ENCODE measurements at regions of chr1 and their contacts with region 1.

Region 1: GRCh38 chr1:93155335-93155734 is 24.9 kb downstream of the TMED5 start:
- DNase-seq: no peak
- H3K4me3 Mint-ChIP-seq: peak overlapping the region; percentile 0
- H3K27ac Mint-ChIP-seq: no peak overlapping the region
- H3K4me1 Mint-ChIP-seq: peaks cover 13% of the 10 kb centered on the region
- H3K27me3 Mint-ChIP-seq: no peaks in the 10 kb centered on the region

Region 2: GRCh38 chr1:92833840-92834239 is 321.5 kb before region 1 on chr1:
- CTCF ChIA-PET with region 1: no interaction called
- POLR2A ChIA-PET with region 1: no interaction called
- DNase-seq: no peak
- H3K4me3 Mint-ChIP-seq: peak overlapping the region; percentile 99
- H3K27ac Mint-ChIP-seq: peak overlapping the region; percentile 97
- H3K4me1 Mint-ChIP-seq: peaks cover 61% of the 10 kb centered on the region
- H3K27me3 Mint-ChIP-seq: no peaks in the 10 kb centered on the region

Region 3: GRCh38 chr1:93219443-93219842 is 64.1 kb after region 1 on chr1:
- CTCF ChIA-PET with region 1: interaction called, 3 read pairs
- POLR2A ChIA-PET with region 1: interaction called, 11 read pairs
- DNase-seq: peak; percentile 50
- H3K4me3 Mint-ChIP-seq: peak overlapping the region; percentile 57
- H3K27ac Mint-ChIP-seq: peak overlapping the region; percentile 83
- H3K4me1 Mint-ChIP-seq: peaks cover 30% of the 10 kb centered on the region
- H3K27me3 Mint-ChIP-seq: no peaks in the 10 kb centered on the region

Measured in activated CD4-positive, alpha-beta T cell treated with anti-CD3 and anti-CD28 coated beads, Interleukin-2, amount 10 ng/mL, durations not matched to agents 7 days and 5 days (primary cell).